ENCODE measurements at regions of chrX and their contacts with region 1.

Region 1: GRCh38 chrX:9341291-9342201 is 123.3 kb upstream of the TBL1X start:
- DNase-seq: peak; percentile 57 to 71
- ATAC-seq: peak in 5 of 8 donors; percentile 16 to 42 (median 19)
- H3K4me3 ChIP-seq: peak overlapping the region in 8 of 10 donors; percentile 5 to 34 (median 30)
- H3K27ac ChIP-seq: peak overlapping the region; percentile 34 to 95 (median 75)
- H3K4me1 ChIP-seq: peaks cover 0 to 40% (median 21%) of the 10 kb centered on the region in 9 donors
- H3K27me3 ChIP-seq: peaks cover 0 to 12% (median 0%) of the 10 kb centered on the region in 7 donors
- CTCF ChIP-seq: peak in 1 of 9 donors; percentile 11

Region 2: GRCh38 chrX:9690046-9690445 is 348.5 kb after region 1 on chrX:
- intact Hi-C with region 1: loop called in 1 of 10 experiments (anchors 10 kb)
- DNase-seq: no peak
- ATAC-seq: no peak
- H3K4me3 ChIP-seq: no peak overlapping the region
- H3K27ac ChIP-seq: no peak overlapping the region
- H3K4me1 ChIP-seq: no peaks in the 10 kb centered on the region
- H3K27me3 ChIP-seq: no peaks in the 10 kb centered on the region
- CTCF ChIP-seq: no peak

Measured in heart right ventricle (tissue), 16 donors.